Endothelial cell of umbilical vein (primary cell): ENCODE measurements at regions of chr11 and their contacts with region 1.

Region 1: DNA sequence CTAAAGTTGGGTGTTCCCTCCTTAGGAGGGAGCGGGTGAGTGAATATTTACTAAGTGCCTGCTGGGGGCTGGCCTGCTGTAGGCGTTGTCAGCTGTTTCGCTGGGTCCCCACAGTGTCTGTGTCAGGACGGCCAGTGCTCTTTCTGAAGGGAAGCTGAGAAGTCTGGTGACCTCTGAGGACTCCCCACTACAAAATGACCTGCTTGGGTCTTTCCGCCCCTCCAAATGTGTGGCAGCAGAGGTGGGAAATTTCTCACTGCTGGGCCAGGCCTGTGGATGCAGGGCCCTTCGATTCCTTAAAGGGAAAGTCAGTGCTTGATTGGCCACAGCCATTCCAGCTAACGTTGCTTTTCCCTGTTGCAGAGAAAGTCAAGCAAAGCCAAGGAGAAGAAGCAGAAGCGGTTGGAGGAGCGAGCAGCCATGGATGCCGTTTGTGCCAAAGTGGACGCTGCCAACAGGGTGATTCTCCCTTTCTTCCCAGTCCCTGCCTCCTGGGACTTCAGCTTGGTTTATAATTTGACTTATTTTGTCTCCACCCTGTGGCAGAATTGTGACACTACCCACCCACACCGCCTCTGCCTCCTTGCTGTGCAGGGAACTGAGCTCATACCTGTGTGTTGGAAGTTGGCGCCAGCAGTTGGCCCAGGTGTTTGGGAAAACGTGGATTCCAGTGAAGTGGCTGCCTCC is 6.8 kb downstream of the NAA40 start:
- DNase-seq: peak; percentile 68
- H3K4me3 ChIP-seq: no peak overlapping the region
- H3K27ac ChIP-seq: no peak overlapping the region
- H3K4me1 ChIP-seq: no peaks in the 10 kb centered on the region
- H3K27me3 ChIP-seq: no peaks in the 10 kb centered on the region
- CTCF ChIP-seq: peak; percentile 50 to 60
- POLR2A ChIP-seq: no peak

Region 2: GRCh38 chr11:63768237-63769043 is 177.2 kb before region 1 on chr11 and contains the start of gene ZFTA:
- CTCF ChIA-PET with region 1: interaction called, 55 read pairs
- POLR2A ChIA-PET with region 1: interaction called, 3 read pairs
- dilution Hi-C with region 1: no loop called
- intact Hi-C with region 1: loop called (anchors 1 kb)
- DNase-seq: peak; percentile 41
- H3K4me3 ChIP-seq: peak within 1 kb of the TSS; percentile 84 to 91 (median 87)
- H3K27ac ChIP-seq: peak within 1 kb of the TSS; percentile 64
- H3K4me1 ChIP-seq: peaks cover 18% of the 10 kb centered on the region
- H3K27me3 ChIP-seq: peaks cover 3 to 6% of the 10 kb centered on the region in 2 experiments
- CTCF ChIP-seq: peak; percentile 58 to 88
- POLR2A ChIP-seq: peak; percentile 53
- total RNA-seq, gene ZFTA: 25.2 and 32.0 TPM in 2 replicates

Region 3: DNA sequence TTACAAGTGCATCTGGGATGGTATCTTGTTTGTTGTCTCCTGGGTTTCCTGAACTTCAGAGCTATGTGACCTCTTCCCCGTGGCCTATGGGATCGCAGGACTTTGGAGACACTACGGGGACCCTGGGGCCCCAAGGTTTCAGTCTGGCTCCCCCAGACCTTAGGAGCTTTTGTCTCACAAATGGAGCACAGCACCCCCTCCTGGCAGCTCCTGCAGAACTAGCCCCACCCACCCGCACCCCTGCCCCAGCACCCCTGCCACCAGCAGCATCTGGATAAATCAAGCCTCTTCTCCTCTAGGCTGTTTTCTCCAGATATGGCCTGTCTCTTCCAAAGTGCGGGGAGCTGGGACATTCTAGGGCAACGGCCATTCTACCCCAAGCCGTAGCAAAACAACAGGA is 39.0 kb before region 1 on chr11:
- CTCF ChIA-PET with region 1: interaction called, 12 read pairs
- POLR2A ChIA-PET with region 1: no interaction called
- dilution Hi-C with region 1: no loop called
- intact Hi-C with region 1: no loop called
- DNase-seq: no peak
- H3K4me3 ChIP-seq: no peak overlapping the region
- H3K27ac ChIP-seq: no peak overlapping the region
- H3K4me1 ChIP-seq: no peaks in the 10 kb centered on the region
- H3K27me3 ChIP-seq: no peaks in the 10 kb centered on the region
- CTCF ChIP-seq: peak in 1 of 2 donors; percentile 20
- POLR2A ChIP-seq: no peak

Region 4: DNA sequence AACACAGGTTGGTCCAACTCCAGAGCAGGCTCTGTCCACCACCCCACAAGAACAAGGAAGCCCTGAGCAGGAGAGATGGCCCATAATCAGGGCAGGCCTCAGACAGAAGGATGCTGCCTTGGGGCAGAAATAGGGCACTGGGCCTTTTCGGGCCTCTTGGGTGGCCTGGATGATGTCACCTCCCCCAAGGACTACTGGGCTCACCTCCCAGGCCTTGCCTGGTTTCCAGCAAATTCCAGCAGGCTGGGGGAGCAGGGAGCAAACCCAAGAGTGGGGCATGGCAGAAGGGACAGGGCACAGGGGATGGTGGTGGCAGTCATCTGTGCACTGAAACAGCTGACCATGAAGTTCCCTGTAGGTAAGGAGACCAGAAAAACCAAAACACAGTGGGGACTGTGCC is 12.2 kb before region 1 on chr11:
- CTCF ChIA-PET with region 1: interaction called, 29 read pairs
- POLR2A ChIA-PET with region 1: no interaction called
- dilution Hi-C with region 1: no loop called
- intact Hi-C with region 1: no loop called
- DNase-seq: no peak
- H3K4me3 ChIP-seq: no peak overlapping the region
- H3K27ac ChIP-seq: no peak overlapping the region
- H3K4me1 ChIP-seq: peaks cover 6% of the 10 kb centered on the region
- H3K27me3 ChIP-seq: peaks cover 1 to 2% of the 10 kb centered on the region in 2 experiments
- CTCF ChIP-seq: no peak
- POLR2A ChIP-seq: no peak

Region 5: DNA sequence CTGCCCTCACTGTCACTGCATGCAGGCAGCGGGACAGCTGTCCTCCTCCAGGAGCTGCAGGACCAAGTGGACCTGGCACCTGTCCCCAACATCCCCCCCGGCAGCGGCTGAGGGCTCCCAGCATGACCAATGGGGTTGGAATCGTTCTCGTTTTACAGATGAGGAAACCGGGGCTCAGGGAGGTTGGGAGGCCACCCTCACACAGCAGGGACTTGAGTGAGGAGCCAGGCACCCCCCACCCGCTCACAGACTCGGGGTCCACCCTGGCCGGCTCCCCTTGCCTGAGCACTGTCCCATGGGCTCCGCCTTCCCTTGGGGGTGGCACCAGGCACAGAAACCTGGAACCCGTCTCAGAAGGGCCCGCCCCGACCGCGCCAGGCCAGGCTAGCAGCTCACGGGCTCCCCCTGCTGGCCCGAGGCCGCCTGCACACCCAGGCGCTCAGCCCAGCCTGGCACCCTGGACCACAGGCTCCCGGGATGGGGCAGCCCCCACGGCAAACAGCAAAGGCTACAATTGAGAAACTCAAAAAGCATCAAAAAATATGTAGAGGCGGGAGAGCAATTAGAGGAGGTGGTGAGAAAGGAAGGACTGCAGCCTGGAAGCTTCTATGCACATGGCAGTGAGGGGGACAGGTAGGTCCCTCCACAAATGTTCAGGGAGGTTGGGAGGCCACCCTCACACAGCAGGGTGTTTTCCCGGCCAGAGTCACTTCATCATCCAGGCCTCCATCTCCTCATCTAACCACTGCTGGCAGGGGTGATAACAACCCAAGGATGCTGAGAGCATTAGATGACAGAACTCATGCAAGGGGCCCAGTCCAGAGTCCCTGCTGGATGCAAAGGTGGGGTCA is 207.4 kb after region 1 on chr11:
- CTCF ChIA-PET with region 1: interaction called, 10 read pairs
- POLR2A ChIA-PET with region 1: no interaction called
- dilution Hi-C with region 1: no loop called
- intact Hi-C with region 1: no loop called
- DNase-seq: peak; percentile 42
- H3K4me3 ChIP-seq: no peak overlapping the region
- H3K27ac ChIP-seq: no peak overlapping the region
- H3K4me1 ChIP-seq: no peaks in the 10 kb centered on the region
- H3K27me3 ChIP-seq: no peaks in the 10 kb centered on the region
- CTCF ChIP-seq: peak; percentile 99 to 100
- POLR2A ChIP-seq: no peak